Activated CD4-positive, alpha-beta T cell treated with anti-CD3 and anti-CD28 coated beads for 36 hours (primary cell): ENCODE measurements at regions of chr9 and their contacts with region 1.

Region 1: DNA sequence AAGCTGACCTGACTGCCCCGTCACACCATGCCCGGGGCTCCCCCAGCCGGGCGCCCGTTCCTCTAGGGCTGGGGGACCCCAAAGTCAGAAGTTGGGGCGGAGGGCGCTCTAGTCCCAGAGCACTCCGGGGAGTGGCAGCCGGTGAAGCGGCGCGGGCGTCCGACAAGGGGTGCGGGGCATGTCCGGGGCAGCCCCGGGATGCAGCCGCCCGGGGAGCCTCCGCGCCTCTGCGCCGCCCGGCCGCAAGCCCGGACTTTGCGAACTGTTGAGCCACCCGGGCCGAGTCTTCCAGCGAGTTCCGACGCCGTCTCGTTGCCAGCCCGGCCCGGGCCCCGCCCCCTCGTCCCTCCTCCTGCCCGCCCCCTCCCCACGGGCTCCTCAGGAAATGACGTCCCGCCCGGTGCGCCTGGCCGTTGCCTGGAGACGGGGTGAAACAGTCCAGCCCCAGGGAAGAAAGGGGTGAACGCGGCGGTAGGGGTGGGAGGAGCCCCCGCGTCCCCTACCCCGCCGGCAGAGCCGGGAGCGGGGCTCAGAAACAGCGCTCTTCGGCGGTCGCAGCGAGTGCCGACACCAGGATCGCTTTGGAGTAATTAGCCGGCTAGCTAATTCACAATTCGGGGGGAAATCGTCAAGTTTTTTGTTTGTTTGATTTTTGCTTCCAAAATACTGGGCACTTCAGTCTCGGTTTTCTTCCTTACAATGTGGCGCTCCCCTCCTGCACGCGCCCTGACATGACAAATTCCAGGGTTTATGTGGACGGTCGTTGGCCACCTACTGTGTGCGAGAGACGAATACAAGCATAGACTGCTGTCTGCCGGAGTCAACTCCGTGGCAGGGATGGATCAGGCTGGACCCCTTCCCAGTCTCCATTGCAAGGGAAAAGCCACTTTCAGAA is at the start of gene WHRN:
- DNase-seq: peak; percentile 93
- ATAC-seq: peak; percentile 87
- H3K4me3 Mint-ChIP-seq: peak within 1 kb of the TSS; percentile 75
- H3K27ac Mint-ChIP-seq: no peak within 1 kb of the TSS
- H3K4me1 Mint-ChIP-seq: peaks cover 21% of the 10 kb centered on the region
- H3K27me3 Mint-ChIP-seq: peaks cover 19% of the 10 kb centered on the region
- total RNA-seq, gene WHRN: 1.9 to 2.0 TPM

Region 2: GRCh38 chr9:114155263-114155972 is 350.0 kb before region 1 on chr9 and contains the start of gene COL27A1:
- CTCF ChIA-PET with region 1: no interaction called
- POLR2A ChIA-PET with region 1: no interaction called
- intact Hi-C with region 1: loop called in 1 of 2 experiments (anchors 5 kb)
- DNase-seq: peak; percentile 92
- ATAC-seq: peak; percentile 91
- H3K4me3 Mint-ChIP-seq: peak within 1 kb of the TSS; percentile 83
- H3K27ac Mint-ChIP-seq: peak within 1 kb of the TSS; percentile 80
- H3K4me1 Mint-ChIP-seq: peaks cover 23% of the 10 kb centered on the region
- H3K27me3 Mint-ChIP-seq: peaks cover 43% of the 10 kb centered on the region
- total RNA-seq, gene COL27A1: 8.9 to 9.1 TPM

Region 3: GRCh38 chr9:114348906-114349482 is 156.4 kb before region 1 on chr9:
- CTCF ChIA-PET with region 1: no interaction called
- POLR2A ChIA-PET with region 1: no interaction called
- intact Hi-C with region 1: loop called in 1 of 2 experiments (anchors 10 kb)
- DNase-seq: peak; percentile 97
- ATAC-seq: peak; percentile 88
- H3K4me3 Mint-ChIP-seq: peak overlapping the region; percentile 47
- H3K27ac Mint-ChIP-seq: peak overlapping the region; percentile 97
- H3K4me1 Mint-ChIP-seq: peaks cover 65% of the 10 kb centered on the region
- H3K27me3 Mint-ChIP-seq: no peaks in the 10 kb centered on the region

Region 4: DNA sequence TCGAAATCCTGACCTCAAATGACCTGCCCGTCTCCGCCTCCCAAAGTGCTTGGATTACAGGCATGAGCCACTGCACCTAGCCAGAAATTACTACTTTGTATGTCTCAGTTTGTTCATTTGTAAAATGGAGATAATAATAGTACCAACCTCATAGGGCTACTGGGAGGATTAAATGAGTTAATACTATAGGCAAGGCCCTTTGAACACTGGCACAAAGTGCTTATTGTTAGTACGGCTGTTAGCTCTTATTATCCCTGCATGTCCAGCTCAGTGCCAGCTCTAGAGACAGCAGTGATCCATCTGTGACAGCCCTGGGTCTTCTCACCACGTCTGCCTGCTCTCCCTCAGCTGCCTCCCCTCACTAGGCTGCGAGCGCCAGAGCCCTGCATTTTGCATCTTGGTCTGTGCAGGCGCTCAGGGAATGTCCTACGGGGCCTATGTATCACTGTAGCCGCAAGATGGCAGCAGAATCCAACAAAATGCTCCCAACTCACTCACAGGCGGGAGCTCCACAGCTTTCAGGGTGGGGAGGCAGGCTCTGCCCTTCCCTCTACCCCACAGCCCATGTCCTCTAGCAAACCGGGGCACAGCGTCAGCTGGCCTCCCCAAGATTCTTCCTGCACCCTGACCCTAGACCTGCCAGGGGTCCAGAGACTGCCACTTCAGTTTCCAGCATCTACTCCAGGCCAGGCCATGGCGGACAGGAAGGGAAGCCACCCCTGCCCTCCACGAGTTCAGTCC is 100.0 kb before region 1 on chr9:
- CTCF ChIA-PET with region 1: interaction called, 27 read pairs
- POLR2A ChIA-PET with region 1: no interaction called
- intact Hi-C with region 1: loop called (anchors 1 kb)
- DNase-seq: peak; percentile 88
- ATAC-seq: peak; percentile 100
- H3K4me3 Mint-ChIP-seq: no peak overlapping the region
- H3K27ac Mint-ChIP-seq: no peak overlapping the region
- H3K4me1 Mint-ChIP-seq: peaks cover 6% of the 10 kb centered on the region
- H3K27me3 Mint-ChIP-seq: no peaks in the 10 kb centered on the region

Region 5: DNA sequence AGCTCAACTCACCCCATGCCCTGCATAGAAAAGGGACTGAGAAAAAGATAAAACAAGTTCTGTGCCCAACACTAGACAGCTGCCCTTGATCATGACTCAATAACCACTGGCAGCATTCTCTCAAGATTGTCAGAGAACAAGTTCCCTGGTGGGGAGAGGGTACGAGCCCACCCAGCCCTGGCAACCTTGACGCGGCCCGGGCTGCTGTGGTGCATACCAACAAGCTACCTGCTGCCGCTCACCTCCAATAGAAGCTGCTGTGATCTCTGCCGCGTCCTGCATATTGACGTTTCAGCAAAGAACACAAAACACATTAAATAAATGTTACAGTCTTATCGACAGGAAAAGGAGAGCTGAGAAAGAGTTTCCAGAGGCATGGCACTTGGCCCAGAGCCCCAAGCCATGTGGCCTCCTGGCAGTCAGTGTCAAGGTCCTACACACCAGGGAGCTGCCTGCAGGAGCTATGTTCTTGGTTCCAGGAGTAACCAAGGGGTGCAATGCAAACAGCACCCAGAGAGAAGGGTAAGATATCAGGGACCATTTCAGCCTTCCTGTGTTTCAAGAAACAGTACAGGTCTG is 28.5 kb before region 1 on chr9:
- CTCF ChIA-PET with region 1: no interaction called
- POLR2A ChIA-PET with region 1: no interaction called
- intact Hi-C with region 1: no loop called
- DNase-seq: no peak
- ATAC-seq: no peak
- H3K4me3 Mint-ChIP-seq: no peak overlapping the region
- H3K27ac Mint-ChIP-seq: no peak overlapping the region
- H3K4me1 Mint-ChIP-seq: peaks cover 8% of the 10 kb centered on the region
- H3K27me3 Mint-ChIP-seq: no peaks in the 10 kb centered on the region

Region 6: DNA sequence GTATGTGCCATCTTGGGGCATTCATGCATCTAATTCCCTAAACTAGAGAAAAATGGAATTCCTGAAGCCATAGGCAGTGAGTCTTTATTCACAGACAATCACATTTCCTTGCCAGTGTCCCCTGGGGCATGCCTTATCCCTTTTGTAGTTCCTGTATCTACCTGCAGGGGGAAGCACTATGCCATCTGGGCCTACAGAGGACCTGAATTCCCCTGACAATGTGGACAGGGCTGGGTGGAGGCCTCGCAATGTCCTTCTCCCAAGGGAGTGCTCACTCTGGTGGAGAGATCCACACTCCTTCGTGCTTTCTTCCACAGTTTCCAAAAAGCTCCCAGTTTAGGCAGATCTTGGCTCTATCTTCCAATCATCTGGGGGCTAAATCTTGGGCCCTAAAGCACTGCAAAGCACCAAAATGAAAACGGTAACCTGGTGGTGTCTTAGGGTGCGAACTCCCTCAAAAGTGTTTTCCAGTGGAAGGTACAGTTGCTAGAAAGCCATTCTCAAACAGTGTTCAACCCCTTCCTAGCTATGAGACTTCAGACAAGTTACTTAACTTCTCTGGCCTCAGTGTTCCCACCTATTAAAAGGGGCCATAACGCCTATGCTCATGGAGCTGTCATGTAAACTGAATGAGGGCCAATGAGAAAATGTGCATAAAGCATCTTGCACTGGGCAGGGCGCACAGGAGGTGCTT is 17.7 kb before region 1 on chr9:
- CTCF ChIA-PET with region 1: interaction called, 14 read pairs
- POLR2A ChIA-PET with region 1: interaction called, 3 read pairs
- intact Hi-C with region 1: loop called (anchors 1 to 2 kb)
- DNase-seq: peak; percentile 72
- ATAC-seq: peak; percentile 63
- H3K4me3 Mint-ChIP-seq: no peak overlapping the region
- H3K27ac Mint-ChIP-seq: no peak overlapping the region
- H3K4me1 Mint-ChIP-seq: peaks cover 25% of the 10 kb centered on the region
- H3K27me3 Mint-ChIP-seq: no peaks in the 10 kb centered on the region

Region 7: GRCh38 chr9:114611516-114612271 is 106.3 kb after region 1 on chr9:
- CTCF ChIA-PET with region 1: no interaction called
- POLR2A ChIA-PET with region 1: no interaction called
- intact Hi-C with region 1: loop called in 1 of 2 experiments (anchors 1 kb)
- DNase-seq: peak; percentile 66
- ATAC-seq: peak; percentile 66
- H3K4me3 Mint-ChIP-seq: peak overlapping the region; percentile 77
- H3K27ac Mint-ChIP-seq: peak overlapping the region; percentile 79
- H3K4me1 Mint-ChIP-seq: peaks cover 50% of the 10 kb centered on the region
- H3K27me3 Mint-ChIP-seq: no peaks in the 10 kb centered on the region